ENCODE measurements at regions of chr2 and their contacts with region 1.

Region 1: GRCh38 chr2:57497489-57498096 is 549.0 kb upstream of the VRK2 start:
- DNase-seq: peak; percentile 14 to 47 (median 33)
- H3K4me3 ChIP-seq: no peak overlapping the region
- H3K4me3 Mint-ChIP-seq: no peak overlapping the region
- H3K27ac ChIP-seq: no peak overlapping the region
- H3K27ac Mint-ChIP-seq: no peak overlapping the region
- H3K4me1 ChIP-seq: no peaks in the 10 kb centered on the region
- H3K4me1 Mint-ChIP-seq: peaks cover 3% of the 10 kb centered on the region
- H3K27me3 ChIP-seq: no peaks in the 10 kb centered on the region
- H3K27me3 Mint-ChIP-seq: no peaks in the 10 kb centered on the region
- CTCF ChIP-seq: peak; percentile 75

Region 2: DNA sequence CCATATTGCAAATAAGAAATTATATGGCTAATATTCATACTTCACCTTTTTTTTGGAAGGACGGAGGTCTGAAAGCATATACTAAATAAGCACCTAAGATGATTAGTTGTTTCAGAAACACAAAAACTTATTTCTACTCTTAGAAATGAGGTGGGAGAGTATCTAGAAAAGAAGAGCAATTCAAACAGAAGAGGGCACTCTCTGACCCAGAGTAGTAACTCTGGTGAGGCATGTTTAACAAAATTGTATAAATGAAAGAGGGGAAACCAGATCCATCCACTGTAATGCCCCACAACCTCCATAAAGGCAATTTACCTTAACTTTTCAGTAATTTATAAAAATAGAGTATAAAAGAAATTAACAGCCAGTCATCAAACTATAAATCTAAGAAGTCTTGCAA is 120.6 kb before region 1 on chr2:
- intact Hi-C with region 1: loop called (anchors 5 to 10 kb)
- DNase-seq: peak in 1 of 3 donors; percentile 3
- H3K4me3 ChIP-seq: no peak overlapping the region
- H3K4me3 Mint-ChIP-seq: no peak overlapping the region
- H3K27ac ChIP-seq: no peak overlapping the region
- H3K27ac Mint-ChIP-seq: no peak overlapping the region
- H3K4me1 ChIP-seq: no peaks in the 10 kb centered on the region
- H3K4me1 Mint-ChIP-seq: no peaks in the 10 kb centered on the region
- H3K27me3 ChIP-seq: no peaks in the 10 kb centered on the region
- H3K27me3 Mint-ChIP-seq: no peaks in the 10 kb centered on the region
- CTCF ChIP-seq: peak; percentile 38

Region 3: DNA sequence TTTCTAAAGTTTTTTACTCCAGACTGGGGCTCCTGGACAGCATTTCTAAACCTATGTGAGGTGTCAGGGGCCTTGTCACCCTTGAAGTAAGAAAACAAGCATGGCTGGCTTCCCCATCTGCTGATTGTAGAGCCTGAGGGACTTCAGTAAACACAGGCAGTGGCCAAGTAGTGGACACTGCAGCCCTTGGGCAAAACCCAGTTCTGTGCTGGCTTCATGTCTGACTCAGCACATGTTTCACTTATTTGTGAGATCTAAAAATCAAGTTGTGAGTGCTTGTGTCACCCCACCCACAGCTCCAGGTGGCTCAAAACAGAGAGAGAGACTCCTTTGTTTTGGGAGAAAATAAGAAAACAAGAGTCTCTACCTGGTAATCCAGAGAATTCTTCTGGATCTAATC is 111.3 kb before region 1 on chr2:
- intact Hi-C with region 1: loop called in 1 of 2 experiments (anchors 10 kb)
- DNase-seq: no peak
- H3K4me3 ChIP-seq: no peak overlapping the region
- H3K4me3 Mint-ChIP-seq: no peak overlapping the region
- H3K27ac ChIP-seq: no peak overlapping the region
- H3K27ac Mint-ChIP-seq: no peak overlapping the region
- H3K4me1 ChIP-seq: no peaks in the 10 kb centered on the region
- H3K4me1 Mint-ChIP-seq: no peaks in the 10 kb centered on the region
- H3K27me3 ChIP-seq: no peaks in the 10 kb centered on the region
- H3K27me3 Mint-ChIP-seq: peaks cover 0 to 2% (median 0%) of the 10 kb centered on the region in 3 donors
- CTCF ChIP-seq: no peak

Region 4: DNA sequence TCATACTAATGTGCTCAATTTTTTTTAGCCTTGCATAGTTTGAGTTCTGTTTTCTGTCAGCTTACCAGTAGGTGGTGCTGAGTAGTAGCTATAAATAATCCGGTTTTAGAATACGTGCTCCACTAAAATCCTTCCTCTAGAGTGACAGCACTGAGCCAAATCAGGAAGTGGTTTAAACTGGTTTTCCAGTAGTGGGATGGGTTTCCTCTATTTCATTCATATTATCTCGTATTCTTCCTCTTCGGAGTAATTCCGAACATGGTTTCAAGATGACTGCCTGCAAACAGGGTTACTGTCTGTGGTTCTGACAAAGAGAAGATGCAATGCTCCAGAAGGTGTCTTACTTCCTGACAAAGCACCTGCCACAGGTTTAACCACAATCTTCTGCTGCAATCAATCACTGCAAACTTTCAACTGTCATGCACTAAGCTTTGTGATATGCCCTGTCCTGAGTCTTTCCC is 52.1 kb after region 1 on chr2:
- intact Hi-C with region 1: no loop called
- DNase-seq: peak; percentile 2 to 29 (median 11)
- H3K4me3 ChIP-seq: peak overlapping the region in 1 of 3 experiments; percentile 24
- H3K4me3 Mint-ChIP-seq: no peak overlapping the region
- H3K27ac ChIP-seq: no peak overlapping the region
- H3K27ac Mint-ChIP-seq: no peak overlapping the region
- H3K4me1 ChIP-seq: peaks cover 0 to 5% of the 10 kb centered on the region in 2 donors
- H3K4me1 Mint-ChIP-seq: peaks cover 7% of the 10 kb centered on the region
- H3K27me3 ChIP-seq: no peaks in the 10 kb centered on the region
- H3K27me3 Mint-ChIP-seq: peaks cover 0 to 3% (median 0%) of the 10 kb centered on the region in 3 donors
- CTCF ChIP-seq: peak; percentile 32

Region 5: DNA sequence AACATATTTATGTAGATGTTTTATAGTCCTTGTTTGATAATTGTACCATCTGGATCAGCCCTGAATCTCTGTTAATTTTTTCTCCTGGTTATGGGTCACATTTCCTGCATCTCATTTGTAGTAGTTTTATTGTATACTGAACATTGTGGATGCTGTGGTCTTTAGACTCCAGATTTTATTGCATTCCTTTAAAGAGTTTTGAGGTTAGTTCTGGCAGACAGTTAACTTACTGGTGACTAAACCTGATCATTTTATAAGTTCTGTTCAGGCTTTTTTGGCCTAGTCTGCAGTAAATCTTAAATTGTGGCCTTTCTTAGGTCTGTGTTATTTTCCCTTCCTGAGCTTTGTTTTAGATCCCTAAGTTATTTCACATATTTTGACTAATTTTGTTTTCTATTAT is 659.2 kb after region 1 on chr2:
- intact Hi-C with region 1: no loop called
- DNase-seq: no peak
- H3K4me3 ChIP-seq: no peak overlapping the region
- H3K4me3 Mint-ChIP-seq: no peak overlapping the region
- H3K27ac ChIP-seq: no peak overlapping the region
- H3K27ac Mint-ChIP-seq: peak overlapping the region in 1 of 7 donors; percentile 63
- H3K4me1 ChIP-seq: no peaks in the 10 kb centered on the region
- H3K4me1 Mint-ChIP-seq: no peaks in the 10 kb centered on the region
- H3K27me3 ChIP-seq: no peaks in the 10 kb centered on the region
- H3K27me3 Mint-ChIP-seq: peaks cover 0 to 1% (median 0%) of the 10 kb centered on the region in 3 donors
- CTCF ChIP-seq: no peak

Measured in CD14-positive monocyte (primary cell).